Activated CD4-positive, alpha-beta T cell treated with anti-CD3 and anti-CD28 coated beads, Interleukin-2, amount 10 ng/mL, durations not matched to agents 24 days and 14 days (primary cell): ENCODE measurements at regions of chr12 and their contacts with region 1.

Region 1: DNA sequence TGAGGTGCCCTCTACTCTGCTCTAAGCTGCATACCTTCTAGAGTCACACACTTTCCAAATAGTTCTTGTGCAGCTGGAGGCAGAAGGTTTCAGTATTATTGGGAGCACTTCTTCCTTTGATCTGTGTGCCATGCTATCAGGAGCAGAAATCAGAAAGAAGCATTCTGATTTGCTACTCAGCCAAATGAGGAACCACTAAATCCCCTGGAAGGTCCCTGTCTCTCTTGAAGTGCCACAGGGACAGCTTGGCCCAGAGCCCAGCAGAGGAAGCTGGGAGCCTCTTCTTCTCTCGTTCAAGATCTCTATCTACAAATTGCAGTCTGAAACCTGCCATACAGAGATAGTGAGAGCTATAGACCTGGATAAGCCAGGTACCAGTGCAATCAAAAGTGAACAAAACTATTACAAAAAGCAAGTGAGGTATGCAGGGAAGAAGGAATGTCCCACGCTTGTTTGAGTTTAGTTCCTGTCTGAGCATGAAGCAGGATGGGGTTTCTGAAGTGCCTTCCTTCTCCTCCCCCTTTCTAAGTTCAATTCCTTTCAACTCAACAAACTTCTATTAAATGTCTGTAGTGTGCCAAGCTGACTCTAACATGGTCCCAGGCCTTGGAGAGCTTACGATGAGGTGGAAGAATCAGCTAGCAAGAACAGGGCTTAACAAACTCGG is 100.9 kb upstream of the PARP11 start:
- DNase-seq: peak; percentile 68
- H3K4me3 Mint-ChIP-seq: peak overlapping the region; percentile 68
- H3K27ac Mint-ChIP-seq: peak overlapping the region; percentile 84
- H3K4me1 Mint-ChIP-seq: peaks cover 49% of the 10 kb centered on the region
- H3K27me3 Mint-ChIP-seq: no peaks in the 10 kb centered on the region

Region 2: GRCh38 chr12:3885277-3886094 is 88.6 kb before region 1 on chr12:
- intact Hi-C with region 1: no loop called
- DNase-seq: peak; percentile 86
- H3K4me3 Mint-ChIP-seq: peak overlapping the region; percentile 34
- H3K27ac Mint-ChIP-seq: no peak overlapping the region
- H3K4me1 Mint-ChIP-seq: peaks cover 12% of the 10 kb centered on the region
- H3K27me3 Mint-ChIP-seq: peaks cover 11% of the 10 kb centered on the region

Region 3: GRCh38 chr12:3896801-3897331 is 77.2 kb before region 1 on chr12:
- intact Hi-C with region 1: loop called (anchors 5 kb)
- DNase-seq: peak; percentile 64
- H3K4me3 Mint-ChIP-seq: peak overlapping the region; percentile 68
- H3K27ac Mint-ChIP-seq: peak overlapping the region; percentile 90
- H3K4me1 Mint-ChIP-seq: peaks cover 24% of the 10 kb centered on the region
- H3K27me3 Mint-ChIP-seq: no peaks in the 10 kb centered on the region

Region 4: DNA sequence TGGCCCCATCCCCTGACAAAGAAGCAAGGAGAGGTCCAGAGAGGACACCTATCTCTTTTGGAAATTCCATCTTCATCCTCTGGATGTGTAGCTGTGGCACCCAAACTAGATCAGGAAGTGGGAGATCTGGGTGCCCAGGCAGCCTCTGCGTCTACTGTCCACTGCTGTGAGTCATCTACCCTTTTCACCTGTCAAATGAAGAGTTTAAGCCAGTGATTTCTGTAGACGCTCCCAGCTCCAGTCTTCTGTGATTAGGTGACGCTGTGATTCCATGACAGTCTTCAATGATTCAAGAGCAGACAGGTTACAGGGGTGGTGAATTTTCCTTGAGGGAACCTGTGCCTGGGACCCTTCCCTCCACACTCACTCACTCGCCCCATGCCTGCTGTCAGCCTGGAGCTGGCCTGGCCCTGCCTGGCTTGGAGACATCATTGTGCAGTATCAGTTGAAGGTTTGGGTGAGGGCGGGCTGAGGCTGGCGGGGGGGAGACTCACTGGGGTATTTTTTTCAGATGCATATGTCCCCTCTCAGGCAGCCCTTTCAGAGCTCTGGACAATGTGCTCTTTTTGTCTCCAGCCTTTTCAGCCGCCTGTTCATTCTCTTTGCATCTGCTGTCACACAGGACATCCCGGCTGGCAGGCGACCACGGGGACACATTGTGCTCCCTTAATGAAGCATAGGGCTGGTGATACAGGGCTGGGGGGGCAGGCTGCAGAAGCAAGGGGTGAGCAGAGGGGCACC is 44.1 kb before region 1 on chr12:
- intact Hi-C with region 1: loop called (anchors 5 kb)
- DNase-seq: no peak
- H3K4me3 Mint-ChIP-seq: no peak overlapping the region
- H3K27ac Mint-ChIP-seq: no peak overlapping the region
- H3K4me1 Mint-ChIP-seq: peaks cover 45% of the 10 kb centered on the region
- H3K27me3 Mint-ChIP-seq: peaks cover 8% of the 10 kb centered on the region

Region 5: GRCh38 chr12:3962631-3963483 is 11.3 kb before region 1 on chr12:
- intact Hi-C with region 1: loop called (anchors 1 kb)
- DNase-seq: peak; percentile 86
- H3K4me3 Mint-ChIP-seq: no peak overlapping the region
- H3K27ac Mint-ChIP-seq: peak overlapping the region; percentile 17
- H3K4me1 Mint-ChIP-seq: peaks cover 22% of the 10 kb centered on the region
- H3K27me3 Mint-ChIP-seq: no peaks in the 10 kb centered on the region

Region 6: GRCh38 chr12:3988519-3989448 is 14.7 kb after region 1 on chr12:
- intact Hi-C with region 1: loop called (anchors 2 kb)
- DNase-seq: peak; percentile 75
- H3K4me3 Mint-ChIP-seq: peak overlapping the region; percentile 49
- H3K27ac Mint-ChIP-seq: peak overlapping the region; percentile 75
- H3K4me1 Mint-ChIP-seq: peaks cover 23% of the 10 kb centered on the region
- H3K27me3 Mint-ChIP-seq: peaks cover 15% of the 10 kb centered on the region

Region 7: GRCh38 chr12:4037747-4038312 is 63.7 kb after region 1 on chr12:
- intact Hi-C with region 1: no loop called
- DNase-seq: no peak
- H3K4me3 Mint-ChIP-seq: no peak overlapping the region
- H3K27ac Mint-ChIP-seq: no peak overlapping the region
- H3K4me1 Mint-ChIP-seq: peaks cover 7% of the 10 kb centered on the region
- H3K27me3 Mint-ChIP-seq: peaks cover 27% of the 10 kb centered on the region

Region 8: GRCh38 chr12:4107436-4107878 is 133.3 kb after region 1 on chr12:
- intact Hi-C with region 1: loop called (anchors 5 kb)
- DNase-seq: peak; percentile 93
- H3K4me3 Mint-ChIP-seq: peak overlapping the region; percentile 47
- H3K27ac Mint-ChIP-seq: peak overlapping the region; percentile 83
- H3K4me1 Mint-ChIP-seq: peaks cover 42% of the 10 kb centered on the region
- H3K27me3 Mint-ChIP-seq: peaks cover 2% of the 10 kb centered on the region

Region 9: GRCh38 chr12:4156317-4156716 is 182.2 kb after region 1 on chr12:
- intact Hi-C with region 1: no loop called
- DNase-seq: no peak
- H3K4me3 Mint-ChIP-seq: no peak overlapping the region
- H3K27ac Mint-ChIP-seq: peak overlapping the region; percentile 73
- H3K4me1 Mint-ChIP-seq: peaks cover 86% of the 10 kb centered on the region
- H3K27me3 Mint-ChIP-seq: no peaks in the 10 kb centered on the region